Caco-2 (cell line): ENCODE measurements at regions of chr6 and their contacts with region 1.

Region 1: DNA sequence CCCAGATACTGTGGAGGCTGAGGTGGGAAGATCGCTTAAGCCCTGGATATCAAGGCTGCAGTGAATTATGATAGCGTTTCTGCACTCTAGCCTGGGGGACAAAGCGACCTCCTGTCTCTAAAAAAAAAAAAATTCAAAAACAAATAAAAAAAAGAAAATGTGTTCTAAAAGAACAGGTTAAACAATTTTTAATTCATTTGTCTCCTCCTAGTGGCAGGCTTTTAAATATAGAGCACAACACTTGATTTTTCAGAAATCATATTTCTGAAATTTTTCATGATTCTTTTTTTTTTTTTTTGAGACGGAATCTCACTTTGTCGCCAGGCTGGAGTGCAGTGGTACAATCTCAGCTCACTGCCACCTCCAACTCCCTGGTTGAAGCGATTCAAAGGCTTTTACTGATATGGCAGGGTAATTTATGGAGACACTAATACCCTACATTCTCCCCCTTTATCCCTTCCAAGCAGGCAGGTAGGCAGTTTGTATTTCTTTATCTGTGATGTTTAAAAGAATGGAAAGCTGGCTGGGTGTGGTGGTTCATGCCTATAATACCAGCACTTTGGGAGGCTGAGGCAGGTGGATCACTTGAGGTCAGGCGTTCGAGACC is 8.7 kb upstream of the GTF3C6 start:
- DNase-seq: no peak
- H3K4me3 ChIP-seq: no peak overlapping the region
- H3K4me3 Mint-ChIP-seq: no peak overlapping the region
- H3K27ac Mint-ChIP-seq: no peak overlapping the region
- H3K4me1 ChIP-seq: peaks cover 29% of the 10 kb centered on the region
- H3K4me1 Mint-ChIP-seq: peaks cover 31% of the 10 kb centered on the region
- H3K27me3 ChIP-seq: no peaks in the 10 kb centered on the region
- H3K27me3 Mint-ChIP-seq: no peaks in the 10 kb centered on the region
- CTCF ChIP-seq: peak; percentile 37 to 43

Region 2: DNA sequence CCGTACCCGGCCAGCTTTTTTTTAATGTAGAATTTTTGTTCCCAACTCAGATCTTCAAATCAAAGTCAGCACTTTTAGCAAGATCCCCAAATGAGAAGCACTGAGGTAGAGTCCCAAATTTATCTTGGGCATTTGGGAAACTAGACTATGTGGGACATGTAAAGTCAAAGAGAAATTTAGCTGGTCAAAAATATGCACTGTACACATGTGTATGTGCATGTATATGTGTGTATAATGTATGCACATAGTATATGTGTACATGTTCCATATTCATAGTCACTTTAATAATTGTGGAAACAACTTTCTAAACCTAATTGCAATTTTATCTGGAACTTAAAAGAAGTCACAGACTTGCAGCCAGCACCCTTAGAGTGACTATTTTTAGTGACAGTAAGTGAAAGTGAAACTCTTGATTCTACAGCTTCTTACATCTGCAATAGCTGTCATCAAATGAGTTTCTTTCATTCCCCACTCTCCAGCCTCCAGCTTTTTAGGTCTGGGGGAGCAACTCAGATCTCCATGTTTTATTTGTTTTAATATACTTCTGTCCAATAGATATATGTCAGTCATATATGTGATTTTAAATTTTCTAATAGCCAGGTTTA is 715.9 kb before region 1 on chr6:
- CTCF ChIA-PET with region 1: no interaction called
- POLR2A ChIA-PET with region 1: no interaction called
- intact Hi-C with region 1: no loop called
- DNase-seq: no peak
- H3K4me3 ChIP-seq: no peak overlapping the region
- H3K4me3 Mint-ChIP-seq: no peak overlapping the region
- H3K27ac Mint-ChIP-seq: no peak overlapping the region
- H3K4me1 ChIP-seq: no peaks in the 10 kb centered on the region
- H3K4me1 Mint-ChIP-seq: no peaks in the 10 kb centered on the region
- H3K27me3 ChIP-seq: no peaks in the 10 kb centered on the region
- H3K27me3 Mint-ChIP-seq: no peaks in the 10 kb centered on the region
- CTCF ChIP-seq: no peak

Region 3: DNA sequence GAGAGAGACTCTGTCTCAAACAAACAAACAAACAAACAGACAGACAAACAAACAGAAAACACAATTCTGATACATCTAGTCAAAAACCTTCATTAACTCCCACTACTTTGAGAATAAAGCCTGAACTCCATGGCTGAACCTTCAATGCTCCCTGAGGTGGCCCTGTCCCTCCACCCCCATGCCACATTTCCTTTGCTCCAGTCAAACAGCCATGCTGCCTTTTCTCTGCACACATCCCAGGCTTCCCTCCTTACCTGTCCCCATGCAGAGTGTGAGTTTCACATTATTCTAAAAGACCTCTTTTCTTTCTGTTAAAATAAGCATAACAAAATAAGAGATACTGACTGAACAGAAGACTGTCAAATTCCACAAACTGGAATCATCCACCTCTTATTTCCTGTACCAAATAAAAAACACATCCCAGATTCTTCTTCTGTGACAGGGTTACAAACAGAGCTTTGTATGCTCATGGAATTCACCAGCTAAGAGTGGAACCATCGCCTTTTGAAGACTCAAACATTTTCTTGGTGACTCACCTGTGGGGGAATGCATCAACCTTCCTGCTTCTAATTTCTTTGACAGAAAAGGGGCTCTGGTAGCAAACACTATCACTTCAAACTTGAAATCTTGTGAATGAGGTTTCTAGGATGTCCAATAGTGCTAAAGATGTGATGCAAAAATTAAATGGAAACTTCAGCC is 402.4 kb before region 1 on chr6:
- CTCF ChIA-PET with region 1: no interaction called
- POLR2A ChIA-PET with region 1: no interaction called
- intact Hi-C with region 1: no loop called
- DNase-seq: no peak
- H3K4me3 ChIP-seq: no peak overlapping the region
- H3K4me3 Mint-ChIP-seq: no peak overlapping the region
- H3K27ac Mint-ChIP-seq: no peak overlapping the region
- H3K4me1 ChIP-seq: no peaks in the 10 kb centered on the region
- H3K4me1 Mint-ChIP-seq: no peaks in the 10 kb centered on the region
- H3K27me3 ChIP-seq: no peaks in the 10 kb centered on the region
- H3K27me3 Mint-ChIP-seq: no peaks in the 10 kb centered on the region
- CTCF ChIP-seq: no peak

Region 4: DNA sequence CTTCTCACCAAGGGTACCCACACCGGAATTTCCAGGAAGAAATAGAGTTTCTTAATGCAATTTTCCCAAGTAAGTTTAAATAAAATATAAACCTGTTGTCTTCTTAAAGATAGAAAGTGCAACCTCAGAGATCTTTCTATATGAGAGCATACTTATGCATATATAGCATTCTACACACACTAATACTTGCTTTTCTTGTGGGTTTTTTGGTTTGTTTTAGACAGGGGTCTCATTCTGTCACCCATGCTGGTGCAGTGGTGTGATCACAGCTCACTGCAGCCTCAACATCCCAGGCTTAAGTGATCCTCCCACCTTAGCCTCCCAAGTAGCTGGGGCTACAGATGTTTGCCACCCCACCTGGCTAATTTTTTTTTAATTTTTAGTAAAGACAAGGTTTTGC is 59.5 kb before region 1 on chr6:
- CTCF ChIA-PET with region 1: no interaction called
- POLR2A ChIA-PET with region 1: no interaction called
- intact Hi-C with region 1: loop called (anchors 5 kb)
- DNase-seq: no peak
- H3K4me3 ChIP-seq: no peak overlapping the region
- H3K4me3 Mint-ChIP-seq: no peak overlapping the region
- H3K27ac Mint-ChIP-seq: no peak overlapping the region
- H3K4me1 ChIP-seq: peaks cover 14% of the 10 kb centered on the region
- H3K4me1 Mint-ChIP-seq: peaks cover 7% of the 10 kb centered on the region
- H3K27me3 ChIP-seq: no peaks in the 10 kb centered on the region
- H3K27me3 Mint-ChIP-seq: no peaks in the 10 kb centered on the region
- CTCF ChIP-seq: no peak

Region 5: GRCh38 chr6:110965629-110966229 is 15.9 kb after region 1 on chr6:
- CTCF ChIA-PET with region 1: no interaction called
- POLR2A ChIA-PET with region 1: no interaction called
- intact Hi-C with region 1: no loop called
- DNase-seq: no peak
- H3K4me3 ChIP-seq: no peak overlapping the region
- H3K4me3 Mint-ChIP-seq: no peak overlapping the region
- H3K27ac Mint-ChIP-seq: no peak overlapping the region
- H3K4me1 ChIP-seq: no peaks in the 10 kb centered on the region
- H3K4me1 Mint-ChIP-seq: peaks cover 8% of the 10 kb centered on the region
- H3K27me3 ChIP-seq: no peaks in the 10 kb centered on the region
- H3K27me3 Mint-ChIP-seq: no peaks in the 10 kb centered on the region
- CTCF ChIP-seq: no peak

Region 6: GRCh38 chr6:111087106-111087835 is 137.5 kb after region 1 on chr6 and contains the start of gene SLC16A10:
- CTCF ChIA-PET with region 1: no interaction called
- POLR2A ChIA-PET with region 1: no interaction called
- intact Hi-C with region 1: no loop called
- DNase-seq: peak; percentile 83 to 90
- H3K4me3 ChIP-seq: peak within 1 kb of the TSS; percentile 85
- H3K4me3 Mint-ChIP-seq: peak within 1 kb of the TSS; percentile 87
- H3K27ac Mint-ChIP-seq: peak within 1 kb of the TSS; percentile 39
- H3K4me1 ChIP-seq: 0 out of 2 replicates have a peak, but pooled peaks cover 7% of the 10 kb centered on the region
- H3K4me1 Mint-ChIP-seq: peaks cover 14% of the 10 kb centered on the region
- H3K27me3 ChIP-seq: no peaks in the 10 kb centered on the region
- H3K27me3 Mint-ChIP-seq: no peaks in the 10 kb centered on the region
- CTCF ChIP-seq: no peak
- total RNA-seq, gene SLC16A10: 13.6 and 14.2 TPM in 2 replicates